ENCODE measurements at regions of chr5 and their contacts with region 1.

Region 1: GRCh38 chr5:139968547-139969261 is 74.4 kb downstream of the NRG2 start:
- DNase-seq: peak; percentile 74
- H3K4me3 ChIP-seq: no peak overlapping the region
- H3K27ac ChIP-seq: no peak overlapping the region
- H3K4me1 ChIP-seq: peaks cover 4% of the 10 kb centered on the region
- H3K27me3 ChIP-seq: no peaks in the 10 kb centered on the region
- CTCF ChIP-seq: peak; percentile 99 to 100

Region 2: GRCh38 chr5:139787568-139788293 is 181.0 kb before region 1 on chr5:
- CTCF ChIA-PET with region 1: interaction called, 50 read pairs
- dilution Hi-C with region 1: no loop called
- in situ Hi-C with region 1: loop called (anchors 5 to 10 kb)
- intact Hi-C with region 1: loop called (anchors 1 kb)
- DNase-seq: peak; percentile 69
- H3K4me3 ChIP-seq: peak overlapping the region; percentile 50 to 79 (median 60)
- H3K27ac ChIP-seq: peak overlapping the region; percentile 34
- H3K4me1 ChIP-seq: peaks cover 8% of the 10 kb centered on the region
- H3K27me3 ChIP-seq: no peaks in the 10 kb centered on the region
- CTCF ChIP-seq: peak; percentile 65 to 95

Region 3: DNA sequence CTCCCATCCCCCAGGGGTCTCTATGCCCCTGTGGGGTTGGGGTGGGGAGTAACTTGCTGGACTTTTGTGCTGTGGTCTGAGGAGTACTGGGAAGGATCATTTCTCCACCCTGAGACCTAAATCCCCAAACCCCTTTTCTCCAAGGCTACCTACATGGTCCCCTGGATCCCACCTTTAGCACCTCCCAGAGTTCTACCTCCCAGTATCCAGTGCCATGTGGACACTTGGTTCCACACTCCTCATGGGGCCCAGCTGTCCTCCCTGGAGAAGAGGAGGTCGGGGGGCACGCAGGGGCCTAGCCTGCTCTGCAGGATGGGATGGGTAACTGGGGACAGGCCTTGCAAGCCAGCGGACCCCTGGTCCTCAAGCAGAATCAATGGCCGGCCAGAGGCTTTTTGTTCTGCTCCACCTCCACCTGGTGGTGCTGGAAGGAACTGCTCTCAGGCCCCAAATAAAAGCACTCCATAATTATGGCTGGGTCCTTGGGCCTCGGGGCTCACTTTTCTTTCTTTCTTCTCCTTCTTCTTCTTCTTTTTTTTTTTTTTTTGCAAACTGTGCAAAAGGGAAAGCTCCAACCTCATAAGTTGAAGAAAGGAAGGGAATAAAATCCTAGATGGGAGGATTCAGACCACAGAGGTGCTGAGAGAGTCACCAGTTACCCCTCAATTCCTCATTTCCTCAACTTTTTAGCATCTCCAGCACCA is 104.7 kb before region 1 on chr5:
- CTCF ChIA-PET with region 1: interaction called, 6 read pairs
- dilution Hi-C with region 1: loop called (anchors 5 kb)
- in situ Hi-C with region 1: no loop called
- intact Hi-C with region 1: loop called (anchors 1 kb)
- DNase-seq: peak; percentile 12
- H3K4me3 ChIP-seq: no peak overlapping the region
- H3K27ac ChIP-seq: no peak overlapping the region
- H3K4me1 ChIP-seq: peaks cover 10% of the 10 kb centered on the region
- H3K27me3 ChIP-seq: no peaks in the 10 kb centered on the region
- CTCF ChIP-seq: peak; percentile 82 to 92

Region 4: DNA sequence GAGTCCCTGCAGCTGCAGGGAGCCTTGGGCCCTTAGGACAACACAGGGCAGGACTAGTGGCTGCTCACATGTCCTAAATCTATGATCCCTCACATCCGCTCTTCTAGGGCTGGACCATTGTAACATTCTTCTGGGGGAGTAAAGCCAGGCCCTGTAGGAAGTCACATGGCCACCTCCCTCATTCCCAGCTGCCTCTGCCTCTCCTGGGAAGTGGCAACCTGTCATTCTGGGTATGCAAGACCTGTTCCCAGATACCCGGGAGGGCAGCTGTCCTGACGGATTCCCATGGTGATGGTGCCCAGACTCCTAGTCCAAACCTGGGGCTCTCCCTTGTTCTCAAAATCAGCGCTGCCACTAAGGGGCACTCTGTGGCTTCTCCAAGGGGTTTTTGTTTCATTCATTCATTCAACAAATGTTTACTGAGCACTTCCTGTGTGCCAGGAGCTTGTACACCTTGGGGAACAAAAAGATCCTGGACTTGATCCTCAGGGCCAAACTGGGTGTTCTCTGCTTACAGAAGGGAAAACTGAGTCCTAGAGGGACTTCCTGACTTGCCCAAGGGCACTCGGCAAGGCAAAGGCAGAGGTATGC is 87.5 kb before region 1 on chr5:
- CTCF ChIA-PET with region 1: interaction called, 14 read pairs
- dilution Hi-C with region 1: no loop called
- in situ Hi-C with region 1: no loop called
- intact Hi-C with region 1: no loop called
- DNase-seq: no peak
- H3K4me3 ChIP-seq: no peak overlapping the region
- H3K27ac ChIP-seq: no peak overlapping the region
- H3K4me1 ChIP-seq: peaks cover 26% of the 10 kb centered on the region
- H3K27me3 ChIP-seq: no peaks in the 10 kb centered on the region
- CTCF ChIP-seq: no peak

Region 5: DNA sequence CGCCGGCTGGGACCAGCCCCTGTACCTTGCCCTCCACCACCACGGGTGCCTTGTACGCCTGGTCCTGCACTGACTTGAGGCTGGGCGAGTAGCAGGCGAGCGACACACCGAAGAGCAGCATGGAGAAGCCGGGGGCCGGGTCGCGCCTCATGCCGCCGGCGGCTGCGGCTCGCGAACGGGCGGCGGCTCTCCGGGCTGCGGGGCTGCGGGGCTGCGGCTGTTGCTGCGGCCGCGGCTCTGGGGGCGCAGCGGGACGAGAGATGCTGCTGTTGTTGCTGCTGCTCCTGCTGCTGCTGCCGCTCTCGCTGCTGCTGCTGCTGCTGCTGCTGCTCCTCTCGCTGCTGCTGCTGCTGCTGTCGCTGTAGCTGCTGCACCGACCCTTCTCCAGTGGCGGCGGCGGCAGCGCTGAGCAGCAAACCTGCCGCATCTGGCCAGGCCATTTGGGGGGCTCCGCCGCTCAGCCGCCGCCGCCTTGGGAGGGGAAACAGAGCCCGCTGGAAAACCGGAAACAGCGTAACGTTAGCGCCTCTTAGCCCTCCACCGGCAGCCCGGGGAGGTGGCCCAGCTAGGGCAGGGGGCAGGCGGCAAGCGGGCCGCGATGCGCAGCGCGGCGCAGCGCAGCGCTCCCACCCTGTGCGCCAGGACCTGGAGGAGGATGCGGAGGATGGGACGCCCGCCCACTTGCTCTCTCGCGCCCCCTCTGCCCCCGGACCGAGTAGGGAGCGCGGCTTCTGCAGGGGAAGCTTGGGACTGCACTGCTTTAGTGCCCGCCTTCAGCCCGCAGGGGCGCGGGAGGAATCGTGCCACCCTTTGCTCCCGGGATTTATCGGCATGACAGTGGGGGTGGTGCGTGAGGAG is 74.2 kb after region 1 on chr5 and contains the start of gene NRG2:
- CTCF ChIA-PET with region 1: no interaction called
- dilution Hi-C with region 1: no loop called
- in situ Hi-C with region 1: no loop called
- intact Hi-C with region 1: loop called (anchors 1 kb)
- DNase-seq: peak; percentile 43
- H3K4me3 ChIP-seq: peak within 1 kb of the TSS; percentile 62 to 68 (median 65)
- H3K27ac ChIP-seq: no peak within 1 kb of the TSS
- H3K4me1 ChIP-seq: peaks cover 29% of the 10 kb centered on the region
- H3K27me3 ChIP-seq: no peaks in the 10 kb centered on the region
- CTCF ChIP-seq: peak; percentile 29 to 49
- total RNA-seq, gene NRG2: 0.17 to 3.9 TPM

Region 6: DNA sequence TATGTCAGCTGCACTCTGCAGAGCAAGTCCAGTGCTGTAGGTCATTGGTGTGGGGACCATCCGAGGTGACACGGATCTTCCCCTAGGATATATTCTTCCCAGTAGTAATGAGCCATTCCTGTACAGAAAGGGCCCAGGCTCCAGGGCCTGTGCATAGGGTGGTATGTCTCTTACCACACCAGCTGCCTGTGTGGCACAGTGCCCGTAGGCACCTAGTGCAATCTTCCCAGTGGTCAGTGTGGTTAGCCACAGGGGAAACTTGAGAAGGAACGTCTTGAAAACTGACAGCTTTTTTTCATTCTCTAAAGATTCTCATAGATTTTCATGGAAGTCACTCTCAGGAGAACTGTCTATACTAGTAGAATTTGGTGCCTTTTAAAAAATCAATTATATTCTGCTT is 246.1 kb after region 1 on chr5:
- CTCF ChIA-PET with region 1: no interaction called
- dilution Hi-C with region 1: no loop called
- in situ Hi-C with region 1: no loop called
- intact Hi-C with region 1: no loop called
- DNase-seq: peak; percentile 92
- H3K4me3 ChIP-seq: no peak overlapping the region
- H3K27ac ChIP-seq: no peak overlapping the region
- H3K4me1 ChIP-seq: peaks cover 32% of the 10 kb centered on the region
- H3K27me3 ChIP-seq: no peaks in the 10 kb centered on the region
- CTCF ChIP-seq: no peak

Measured in mammary epithelial cell (primary cell).